Sigmoid colon (tissue), 7 donors: ENCODE measurements at regions of chr16 and their contacts with region 1.

Region 1: GRCh38 chr16:86892509-86892908 is 314.2 kb downstream of the FOXL1 start:
- DNase-seq: no peak
- H3K4me3 ChIP-seq: no peak overlapping the region
- H3K27ac ChIP-seq: no peak overlapping the region
- H3K4me1 ChIP-seq: no peaks in the 10 kb centered on the region
- H3K27me3 ChIP-seq: peaks cover 4 to 76% (median 22%) of the 10 kb centered on the region in 3 donors
- CTCF ChIP-seq: no peak
- EP300 ChIP-seq: no peak
- POLR2A ChIP-seq: no peak

Region 2: GRCh38 chr16:86285938-86286921 is 606.3 kb before region 1 on chr16:
- intact Hi-C with region 1: no loop called
- DNase-seq: peak; percentile 85
- H3K4me3 ChIP-seq: peak overlapping the region; percentile 36 to 52 (median 42)
- H3K27ac ChIP-seq: peak overlapping the region in 3 of 4 donors; percentile 22 to 74 (median 59)
- H3K4me1 ChIP-seq: peaks cover 0 to 32% (median 16%) of the 10 kb centered on the region in 4 donors
- H3K27me3 ChIP-seq: peaks cover 0 to 25% (median 0%) of the 10 kb centered on the region in 3 donors
- CTCF ChIP-seq: no peak
- EP300 ChIP-seq: peak in 2 of 4 donors; percentile 66 to 81
- POLR2A ChIP-seq: no peak

Region 3: DNA sequence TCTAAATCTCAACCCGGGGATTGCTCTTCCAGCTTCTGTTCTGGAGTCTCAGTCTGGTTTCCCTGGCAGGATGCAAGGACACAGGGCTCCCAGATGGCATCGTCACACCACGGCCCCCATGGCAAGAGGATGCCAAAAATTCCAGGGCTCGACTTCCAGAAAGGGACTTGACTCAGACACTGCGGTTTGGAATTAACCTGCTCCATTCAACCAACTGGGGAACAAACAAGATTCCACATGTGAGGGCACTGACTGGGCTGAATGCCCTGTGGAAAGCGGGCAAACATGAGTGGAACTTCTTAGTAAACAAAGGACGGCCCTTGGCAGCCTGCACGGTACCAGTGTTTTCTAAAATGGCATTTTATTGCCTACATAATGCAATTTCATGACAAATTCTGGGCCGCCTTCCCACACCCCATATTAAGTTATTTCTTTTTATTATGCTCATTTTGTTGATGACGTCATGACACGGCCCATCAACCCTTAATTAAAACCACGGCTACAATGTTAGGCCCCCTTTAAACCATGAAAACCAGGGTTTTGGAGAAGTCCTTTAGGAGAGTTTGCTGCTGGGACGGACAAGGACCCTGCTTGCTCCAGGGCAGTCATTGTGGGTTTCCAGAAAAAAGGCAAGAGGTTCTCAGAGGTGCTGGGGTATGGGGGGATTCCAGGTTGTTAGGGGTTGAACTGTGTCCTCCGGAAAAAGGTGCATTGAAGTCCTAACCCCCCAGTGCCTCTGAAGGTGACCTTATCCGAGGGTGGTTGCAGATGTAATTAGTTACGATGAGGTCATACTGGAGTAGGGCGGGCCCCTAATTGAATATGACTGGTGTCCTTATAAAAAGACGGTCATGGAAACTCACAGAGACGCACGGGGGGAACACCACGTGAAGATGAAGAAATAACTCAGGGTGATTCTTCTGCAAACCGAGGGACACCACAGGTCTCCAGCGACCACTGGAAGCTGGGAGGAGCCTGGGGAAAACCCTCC is 108.6 kb before region 1 on chr16:
- intact Hi-C with region 1: no loop called
- DNase-seq: peak; percentile 80
- H3K4me3 ChIP-seq: no peak overlapping the region
- H3K27ac ChIP-seq: no peak overlapping the region
- H3K4me1 ChIP-seq: peaks cover 0 to 12% (median 6%) of the 10 kb centered on the region in 4 donors
- H3K27me3 ChIP-seq: peaks cover 0 to 38% (median 14%) of the 10 kb centered on the region in 3 donors
- CTCF ChIP-seq: no peak
- EP300 ChIP-seq: no peak
- POLR2A ChIP-seq: no peak

Region 4: GRCh38 chr16:86942469-86943051 is 50.1 kb after region 1 on chr16:
- intact Hi-C with region 1: loop called (anchors 5 kb)
- DNase-seq: no peak
- H3K4me3 ChIP-seq: no peak overlapping the region
- H3K27ac ChIP-seq: no peak overlapping the region
- H3K4me1 ChIP-seq: no peaks in the 10 kb centered on the region
- H3K27me3 ChIP-seq: peaks cover 0 to 17% (median 0%) of the 10 kb centered on the region in 3 donors
- CTCF ChIP-seq: no peak
- EP300 ChIP-seq: no peak
- POLR2A ChIP-seq: no peak